HEK293T (cell line): ENCODE measurements at regions of chr1 and their contacts with region 1.

Region 1: DNA sequence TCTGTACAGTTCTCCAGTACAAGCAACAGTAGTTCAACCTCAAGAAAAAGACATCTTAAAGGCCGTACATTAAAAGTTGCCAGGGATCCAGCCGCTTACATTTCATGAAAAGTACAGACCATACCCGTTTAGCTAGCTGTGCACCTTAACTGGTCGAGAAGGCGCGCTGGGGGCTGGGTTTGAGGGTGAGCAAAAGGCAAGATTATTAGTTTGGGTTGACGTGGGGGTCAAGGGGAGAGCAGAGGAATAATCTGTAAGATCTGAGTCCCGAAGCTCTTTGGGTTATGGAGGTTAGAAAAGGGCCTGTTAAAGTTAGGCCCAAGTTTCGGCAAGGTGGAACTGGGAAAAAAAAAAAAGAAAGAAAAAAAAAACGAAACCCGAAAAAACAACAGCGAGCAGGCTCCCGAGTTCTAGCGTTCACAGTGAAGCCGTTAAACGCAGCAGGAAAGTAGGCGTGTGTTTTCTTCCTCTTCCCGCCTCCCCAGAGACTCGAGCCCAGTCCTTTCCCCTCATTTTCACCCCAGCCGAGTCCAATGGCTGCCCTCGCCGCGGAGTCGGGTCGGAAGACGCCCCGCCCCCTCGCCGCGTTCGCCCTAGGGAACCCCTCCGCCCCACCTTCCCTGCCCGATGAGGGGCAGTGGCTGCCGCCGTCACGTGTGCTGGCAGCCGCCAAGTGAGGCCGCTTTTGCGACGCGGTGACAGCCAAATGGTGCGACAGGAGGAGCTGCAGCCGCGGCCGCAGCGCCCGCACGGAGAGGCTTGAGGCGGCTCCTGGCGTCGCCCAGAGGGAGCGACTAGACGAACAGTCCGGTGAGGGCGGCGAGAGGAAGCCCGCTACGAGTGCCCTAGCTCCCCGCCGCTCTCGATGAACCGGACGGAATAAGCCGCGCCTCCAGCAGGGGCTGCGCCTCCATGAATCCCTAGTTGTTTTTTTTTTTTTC is at the start of gene PKN2:
- DNase-seq: peak; percentile 98

Region 2: DNA sequence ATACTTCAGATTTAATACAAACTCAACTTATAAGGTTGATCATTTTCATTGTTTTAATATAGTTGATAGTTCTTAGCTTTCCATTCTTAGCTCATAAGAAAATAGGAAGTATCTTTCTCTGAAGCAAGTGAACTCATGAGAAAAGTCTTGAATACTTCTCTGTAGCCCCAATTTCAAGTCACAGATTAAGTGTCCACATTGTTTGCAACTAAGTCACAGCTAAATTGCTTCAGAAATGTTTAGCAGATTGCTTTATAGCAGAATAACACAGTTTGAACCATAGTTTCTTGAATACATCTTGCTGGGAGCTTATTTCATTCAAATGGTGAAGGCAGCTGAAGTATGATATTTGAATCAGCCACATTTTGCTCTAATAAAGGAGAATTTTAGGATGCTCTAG is 10.4 kb before region 1 on chr1:
- CTCF ChIA-PET with region 1: interaction called, 4 read pairs
- POLR2A ChIA-PET with region 1: interaction called, 25 read pairs
- DNase-seq: no peak

Region 3: GRCh38 chr1:88695781-88696180 is 12.0 kb after region 1 on chr1:
- CTCF ChIA-PET with region 1: interaction called, 3 read pairs
- POLR2A ChIA-PET with region 1: interaction called, 16 read pairs
- DNase-seq: no peak

Region 4: GRCh38 chr1:88708021-88708420 is 24.2 kb after region 1 on chr1:
- CTCF ChIA-PET with region 1: no interaction called
- POLR2A ChIA-PET with region 1: no interaction called
- DNase-seq: no peak